CD4-positive, alpha-beta T cell (primary cell): ENCODE measurements at regions of chr9 and their contacts with region 1.

Region 1: GRCh38 chr9:72526901-72527800 is 5.7 kb downstream of the TMC1 start:
- DNase-seq: peak; percentile 58 to 91 (median 80)
- ATAC-seq: peak; percentile 85
- H3K4me3 ChIP-seq: peak overlapping the region; percentile 47
- H3K4me3 Mint-ChIP-seq: peak overlapping the region; percentile 84
- H3K27ac ChIP-seq: peak overlapping the region; percentile 59 to 63
- H3K27ac Mint-ChIP-seq: peak overlapping the region; percentile 84
- H3K4me1 ChIP-seq: peaks cover 25% of the 10 kb centered on the region
- H3K4me1 Mint-ChIP-seq: peaks cover 31% of the 10 kb centered on the region
- H3K27me3 ChIP-seq: no peaks in the 10 kb centered on the region
- H3K27me3 Mint-ChIP-seq: no peaks in the 10 kb centered on the region
- CTCF ChIP-seq: no peak

Region 2: GRCh38 chr9:72443855-72444254 is 83.3 kb before region 1 on chr9:
- CTCF ChIA-PET with region 1: no interaction called
- POLR2A ChIA-PET with region 1: no interaction called
- intact Hi-C with region 1: loop called in 1 of 2 experiments (anchors 5 kb)
- DNase-seq: peak in 4 of 14 experiments; percentile 21 to 65 (median 52)
- ATAC-seq: peak; percentile 56
- H3K4me3 ChIP-seq: no peak overlapping the region
- H3K4me3 Mint-ChIP-seq: no peak overlapping the region
- H3K27ac ChIP-seq: no peak overlapping the region
- H3K27ac Mint-ChIP-seq: peak overlapping the region; percentile 31
- H3K4me1 ChIP-seq: peaks cover 13% of the 10 kb centered on the region
- H3K4me1 Mint-ChIP-seq: peaks cover 24% of the 10 kb centered on the region
- H3K27me3 ChIP-seq: no peaks in the 10 kb centered on the region
- H3K27me3 Mint-ChIP-seq: no peaks in the 10 kb centered on the region
- CTCF ChIP-seq: no peak

Region 3: GRCh38 chr9:72473474-72474261 is 53.5 kb before region 1 on chr9:
- CTCF ChIA-PET with region 1: no interaction called
- POLR2A ChIA-PET with region 1: no interaction called
- intact Hi-C with region 1: loop called in 1 of 2 experiments (anchors 5 kb)
- DNase-seq: peak in 2 of 14 experiments; percentile 33 to 38
- ATAC-seq: no peak
- H3K4me3 ChIP-seq: no peak overlapping the region
- H3K4me3 Mint-ChIP-seq: no peak overlapping the region
- H3K27ac ChIP-seq: no peak overlapping the region
- H3K27ac Mint-ChIP-seq: no peak overlapping the region
- H3K4me1 ChIP-seq: peaks cover 5% of the 10 kb centered on the region
- H3K4me1 Mint-ChIP-seq: peaks cover 15% of the 10 kb centered on the region
- H3K27me3 ChIP-seq: no peaks in the 10 kb centered on the region
- H3K27me3 Mint-ChIP-seq: no peaks in the 10 kb centered on the region
- CTCF ChIP-seq: no peak